ENCODE measurements at regions of chr22 and their contacts with region 1.

Region 1: DNA sequence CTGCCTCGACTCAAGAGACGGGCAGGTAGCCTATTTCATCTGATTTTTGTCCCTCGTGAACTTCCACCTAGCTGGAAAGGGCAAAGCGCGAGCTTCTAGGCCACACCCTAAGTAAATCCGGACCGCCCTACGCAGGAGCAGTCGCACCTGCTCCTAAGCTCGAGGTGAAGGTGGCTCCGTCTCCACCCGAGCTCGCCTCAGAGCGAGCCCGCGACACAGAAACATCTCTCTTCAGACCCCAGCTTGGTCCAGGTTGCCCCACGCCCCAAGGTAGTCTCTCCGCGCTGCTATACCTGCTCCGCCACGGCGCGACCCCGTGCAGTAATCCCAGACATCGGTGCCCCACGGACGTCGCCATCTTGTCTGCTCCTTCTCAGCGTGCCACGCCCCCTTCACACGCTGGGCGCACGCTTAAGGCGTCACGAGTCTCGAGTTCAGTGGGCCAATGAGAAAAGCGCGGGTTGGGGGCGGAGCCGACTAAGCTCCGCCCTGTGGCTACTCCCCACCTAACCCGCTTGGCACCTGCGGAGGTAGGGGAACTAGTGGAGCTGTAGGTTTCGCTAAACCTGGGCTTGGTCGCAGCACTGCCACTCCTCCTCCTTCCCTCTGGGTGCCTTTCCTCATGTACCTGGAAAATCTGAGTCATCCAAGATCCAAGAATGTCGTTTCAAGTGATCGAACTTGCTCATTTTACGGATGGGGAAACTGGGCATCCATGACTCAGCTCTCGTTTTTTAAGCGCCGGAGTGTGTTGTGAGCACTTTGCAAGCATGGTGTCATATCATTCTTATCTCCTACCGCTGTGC is at the start of gene PISD:
- DNase-seq: peak; percentile 99
- ATAC-seq: peak; percentile 98
- H3K4me3 ChIP-seq: peak within 1 kb of the TSS; percentile 71 to 97 (median 86)
- H3K4me3 Mint-ChIP-seq: peak within 1 kb of the TSS; percentile 96
- H3K27ac ChIP-seq: peak within 1 kb of the TSS; percentile 57 to 81
- H3K27ac Mint-ChIP-seq: peak within 1 kb of the TSS; percentile 97
- H3K4me1 ChIP-seq: peaks cover 12 to 23% of the 10 kb centered on the region in 2 donors
- H3K4me1 Mint-ChIP-seq: peaks cover 31% of the 10 kb centered on the region
- H3K27me3 ChIP-seq: no peaks in the 10 kb centered on the region
- H3K27me3 Mint-ChIP-seq: no peaks in the 10 kb centered on the region
- CTCF ChIP-seq: no peak
- total RNA-seq, gene PISD: 52.5 and 57.2 TPM in 2 replicates

Region 2: GRCh38 chr22:31399211-31400028 is 262.6 kb before region 1 on chr22 and contains the start of gene DRG1:
- CTCF ChIA-PET with region 1: no interaction called
- POLR2A ChIA-PET with region 1: interaction called, 3 read pairs
- intact Hi-C with region 1: loop called (anchors 1 kb)
- DNase-seq: peak; percentile 95
- ATAC-seq: peak; percentile 99
- H3K4me3 ChIP-seq: peak within 1 kb of the TSS; percentile 79 to 88 (median 85)
- H3K4me3 Mint-ChIP-seq: peak within 1 kb of the TSS; percentile 98
- H3K27ac ChIP-seq: peak within 1 kb of the TSS; percentile 60 to 89
- H3K27ac Mint-ChIP-seq: peak within 1 kb of the TSS; percentile 95
- H3K4me1 ChIP-seq: peaks cover 13 to 17% of the 10 kb centered on the region in 2 donors
- H3K4me1 Mint-ChIP-seq: peaks cover 21% of the 10 kb centered on the region
- H3K27me3 ChIP-seq: no peaks in the 10 kb centered on the region
- H3K27me3 Mint-ChIP-seq: peaks cover 2% of the 10 kb centered on the region
- CTCF ChIP-seq: no peak
- total RNA-seq, gene DRG1: 58.9 and 77.7 TPM in 2 replicates

Region 3: DNA sequence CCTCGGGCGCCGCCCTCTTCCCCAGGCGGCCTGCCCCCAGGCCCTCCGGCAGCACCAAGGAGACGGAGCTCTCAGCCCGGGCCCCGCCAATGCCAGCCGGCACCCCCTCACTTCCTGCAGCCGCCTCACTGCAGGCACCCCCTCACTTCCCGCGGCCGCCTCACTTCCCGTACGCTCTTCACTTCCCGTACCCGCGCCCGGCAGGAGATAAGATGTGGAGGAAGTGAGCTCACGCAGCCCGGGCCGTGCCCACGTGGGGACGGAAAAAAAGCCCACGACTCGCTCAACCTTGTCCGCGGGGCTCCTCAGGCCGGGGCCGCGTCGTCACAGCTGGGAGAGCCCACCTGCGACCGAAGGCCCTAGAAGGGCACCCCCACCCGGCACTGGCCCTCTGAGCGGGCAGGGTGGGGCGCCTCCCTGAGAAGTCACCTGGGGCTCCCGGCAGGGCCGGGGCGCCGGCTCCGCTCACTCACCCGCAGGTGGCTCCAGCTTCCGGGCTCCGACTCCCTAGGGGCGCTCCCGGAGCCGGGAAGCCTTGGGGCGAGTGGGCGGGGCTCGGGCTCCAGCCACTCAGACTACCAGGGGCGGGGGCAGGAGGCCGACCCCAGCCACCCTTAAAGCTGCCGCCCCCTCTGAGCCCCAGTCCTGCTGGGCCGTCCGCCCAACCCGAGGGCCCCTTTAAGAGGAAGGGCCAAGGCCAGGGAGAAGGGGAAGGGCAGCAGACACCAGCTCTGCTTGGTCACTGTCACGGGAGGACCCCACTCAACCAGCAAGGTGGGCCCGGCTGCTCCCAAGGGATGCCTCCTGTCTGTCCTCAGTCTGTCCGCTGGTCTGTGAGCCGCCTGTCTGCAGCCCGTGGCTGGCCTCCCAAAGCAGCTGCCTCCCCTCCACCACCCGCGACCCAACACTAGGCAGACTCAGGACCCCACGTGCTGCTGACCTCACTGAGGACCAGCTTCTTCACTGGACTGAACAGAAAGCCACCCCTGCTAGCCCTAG is 31.4 kb before region 1 on chr22:
- CTCF ChIA-PET with region 1: interaction called, 9 read pairs
- POLR2A ChIA-PET with region 1: interaction called, 13 read pairs
- intact Hi-C with region 1: loop called (anchors 1 kb)
- DNase-seq: peak; percentile 98
- ATAC-seq: peak; percentile 82
- H3K4me3 ChIP-seq: peak overlapping the region in 4 of 5 experiments; percentile 60 to 79 (median 66)
- H3K4me3 Mint-ChIP-seq: peak overlapping the region; percentile 92
- H3K27ac ChIP-seq: peak overlapping the region; percentile 95 to 98
- H3K27ac Mint-ChIP-seq: peak overlapping the region; percentile 96
- H3K4me1 ChIP-seq: peaks cover 23 to 58% of the 10 kb centered on the region in 2 donors
- H3K4me1 Mint-ChIP-seq: peaks cover 65% of the 10 kb centered on the region
- H3K27me3 ChIP-seq: no peaks in the 10 kb centered on the region
- H3K27me3 Mint-ChIP-seq: no peaks in the 10 kb centered on the region
- CTCF ChIP-seq: no peak

Region 4: GRCh38 chr22:31676700-31677099 is 14.6 kb after region 1 on chr22:
- CTCF ChIA-PET with region 1: interaction called, 67 read pairs
- POLR2A ChIA-PET with region 1: interaction called, 9 read pairs
- intact Hi-C with region 1: loop called (anchors 1 kb)
- DNase-seq: peak; percentile 92
- ATAC-seq: peak; percentile 100
- H3K4me3 ChIP-seq: peak overlapping the region; percentile 48 to 79 (median 70)
- H3K4me3 Mint-ChIP-seq: peak overlapping the region; percentile 88
- H3K27ac ChIP-seq: peak overlapping the region; percentile 55 to 85
- H3K27ac Mint-ChIP-seq: peak overlapping the region; percentile 90
- H3K4me1 ChIP-seq: peaks cover 10 to 28% of the 10 kb centered on the region in 2 donors
- H3K4me1 Mint-ChIP-seq: peaks cover 26% of the 10 kb centered on the region
- H3K27me3 ChIP-seq: no peaks in the 10 kb centered on the region
- H3K27me3 Mint-ChIP-seq: no peaks in the 10 kb centered on the region
- CTCF ChIP-seq: no peak

Region 5: GRCh38 chr22:31764785-31765184 is 102.7 kb after region 1 on chr22:
- CTCF ChIA-PET with region 1: interaction called, 3 read pairs
- POLR2A ChIA-PET with region 1: interaction called, 10 read pairs
- intact Hi-C with region 1: no loop called
- DNase-seq: no peak
- ATAC-seq: no peak
- H3K4me3 ChIP-seq: no peak overlapping the region
- H3K4me3 Mint-ChIP-seq: no peak overlapping the region
- H3K27ac ChIP-seq: no peak overlapping the region
- H3K27ac Mint-ChIP-seq: no peak overlapping the region
- H3K4me1 ChIP-seq: no peaks in the 10 kb centered on the region
- H3K4me1 Mint-ChIP-seq: no peaks in the 10 kb centered on the region
- H3K27me3 ChIP-seq: no peaks in the 10 kb centered on the region
- H3K27me3 Mint-ChIP-seq: no peaks in the 10 kb centered on the region
- CTCF ChIP-seq: no peak

Region 6: DNA sequence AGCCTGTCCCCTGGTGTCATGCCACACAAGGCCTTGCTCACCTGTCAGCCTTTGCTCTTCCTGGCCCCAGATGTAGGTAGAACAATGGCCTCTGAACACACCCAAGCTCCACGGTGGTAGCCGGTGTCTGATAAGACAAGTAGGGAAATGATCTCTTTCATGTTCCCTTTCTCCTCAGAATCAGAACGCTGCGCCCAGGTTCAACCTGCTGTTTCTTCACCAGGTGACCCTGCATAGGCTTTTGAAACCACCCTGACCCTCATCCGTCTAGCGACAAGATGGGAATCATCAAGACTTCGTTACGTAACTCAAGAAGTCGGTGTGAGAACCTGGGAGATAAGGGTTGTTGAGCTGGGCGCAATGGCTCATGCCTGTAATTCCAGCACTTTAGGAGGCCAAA is 253.6 kb after region 1 on chr22:
- CTCF ChIA-PET with region 1: no interaction called
- POLR2A ChIA-PET with region 1: no interaction called
- intact Hi-C with region 1: no loop called
- DNase-seq: no peak
- ATAC-seq: no peak
- H3K4me3 ChIP-seq: no peak overlapping the region
- H3K4me3 Mint-ChIP-seq: no peak overlapping the region
- H3K27ac ChIP-seq: no peak overlapping the region
- H3K27ac Mint-ChIP-seq: no peak overlapping the region
- H3K4me1 ChIP-seq: peaks cover 12 to 14% of the 10 kb centered on the region in 2 donors
- H3K4me1 Mint-ChIP-seq: peaks cover 17% of the 10 kb centered on the region
- H3K27me3 ChIP-seq: no peaks in the 10 kb centered on the region
- H3K27me3 Mint-ChIP-seq: no peaks in the 10 kb centered on the region
- CTCF ChIP-seq: no peak

Region 7: GRCh38 chr22:31954535-31955523 is 292.8 kb after region 1 on chr22:
- CTCF ChIA-PET with region 1: interaction called, 17 read pairs
- POLR2A ChIA-PET with region 1: no interaction called
- intact Hi-C with region 1: no loop called
- DNase-seq: no peak
- ATAC-seq: no peak
- H3K4me3 ChIP-seq: no peak overlapping the region
- H3K4me3 Mint-ChIP-seq: no peak overlapping the region
- H3K27ac ChIP-seq: no peak overlapping the region
- H3K27ac Mint-ChIP-seq: no peak overlapping the region
- H3K4me1 ChIP-seq: no peaks in the 10 kb centered on the region
- H3K4me1 Mint-ChIP-seq: peaks cover 25% of the 10 kb centered on the region
- H3K27me3 ChIP-seq: no peaks in the 10 kb centered on the region
- H3K27me3 Mint-ChIP-seq: no peaks in the 10 kb centered on the region
- CTCF ChIP-seq: no peak

Region 8: GRCh38 chr22:32474635-32475467 is 812.8 kb after region 1 on chr22 and contains the start of gene FBXO7:
- CTCF ChIA-PET with region 1: no interaction called
- POLR2A ChIA-PET with region 1: no interaction called
- intact Hi-C with region 1: loop called (anchors 10 kb)
- DNase-seq: peak; percentile 94
- ATAC-seq: peak; percentile 83
- H3K4me3 ChIP-seq: peak within 1 kb of the TSS; percentile 61 to 81 (median 72)
- H3K4me3 Mint-ChIP-seq: peak within 1 kb of the TSS; percentile 97
- H3K27ac ChIP-seq: peak within 1 kb of the TSS; percentile 86 to 98
- H3K27ac Mint-ChIP-seq: peak within 1 kb of the TSS; percentile 94
- H3K4me1 ChIP-seq: peaks cover 26 to 32% of the 10 kb centered on the region in 2 donors
- H3K4me1 Mint-ChIP-seq: peaks cover 32% of the 10 kb centered on the region
- H3K27me3 ChIP-seq: no peaks in the 10 kb centered on the region
- H3K27me3 Mint-ChIP-seq: no peaks in the 10 kb centered on the region
- CTCF ChIP-seq: peak; percentile 44
- total RNA-seq, gene FBXO7: 103 and 106 TPM in 2 replicates

Measured in B cell (primary cell).